ENCODE measurements at regions of chr16 and their contacts with region 1.

Region 1: GRCh38 chr16:54929090-54930004 is 1.3 kb upstream of the IRX5 start:
- DNase-seq: peak; percentile 100
- H3K4me3 ChIP-seq: peak overlapping the region; percentile 76
- H3K4me3 Mint-ChIP-seq: peak overlapping the region; percentile 96
- H3K27ac Mint-ChIP-seq: peak overlapping the region; percentile 89
- H3K4me1 ChIP-seq: peaks cover 24% of the 10 kb centered on the region
- H3K4me1 Mint-ChIP-seq: peaks cover 27% of the 10 kb centered on the region
- H3K27me3 ChIP-seq: no peaks in the 10 kb centered on the region
- H3K27me3 Mint-ChIP-seq: no peaks in the 10 kb centered on the region
- CTCF ChIP-seq: peak in 1 of 2 experiments; percentile 23

Region 2: GRCh38 chr16:53881371-53881770 is 1048.0 kb before region 1 on chr16:
- CTCF ChIA-PET with region 1: no interaction called
- POLR2A ChIA-PET with region 1: no interaction called
- intact Hi-C with region 1: loop called (anchors 2 kb)
- DNase-seq: peak; percentile 77 to 91
- H3K4me3 ChIP-seq: no peak overlapping the region
- H3K4me3 Mint-ChIP-seq: no peak overlapping the region
- H3K27ac Mint-ChIP-seq: peak overlapping the region; percentile 84
- H3K4me1 ChIP-seq: peaks cover 37% of the 10 kb centered on the region
- H3K4me1 Mint-ChIP-seq: peaks cover 27% of the 10 kb centered on the region
- H3K27me3 ChIP-seq: no peaks in the 10 kb centered on the region
- H3K27me3 Mint-ChIP-seq: no peaks in the 10 kb centered on the region
- CTCF ChIP-seq: no peak

Region 3: DNA sequence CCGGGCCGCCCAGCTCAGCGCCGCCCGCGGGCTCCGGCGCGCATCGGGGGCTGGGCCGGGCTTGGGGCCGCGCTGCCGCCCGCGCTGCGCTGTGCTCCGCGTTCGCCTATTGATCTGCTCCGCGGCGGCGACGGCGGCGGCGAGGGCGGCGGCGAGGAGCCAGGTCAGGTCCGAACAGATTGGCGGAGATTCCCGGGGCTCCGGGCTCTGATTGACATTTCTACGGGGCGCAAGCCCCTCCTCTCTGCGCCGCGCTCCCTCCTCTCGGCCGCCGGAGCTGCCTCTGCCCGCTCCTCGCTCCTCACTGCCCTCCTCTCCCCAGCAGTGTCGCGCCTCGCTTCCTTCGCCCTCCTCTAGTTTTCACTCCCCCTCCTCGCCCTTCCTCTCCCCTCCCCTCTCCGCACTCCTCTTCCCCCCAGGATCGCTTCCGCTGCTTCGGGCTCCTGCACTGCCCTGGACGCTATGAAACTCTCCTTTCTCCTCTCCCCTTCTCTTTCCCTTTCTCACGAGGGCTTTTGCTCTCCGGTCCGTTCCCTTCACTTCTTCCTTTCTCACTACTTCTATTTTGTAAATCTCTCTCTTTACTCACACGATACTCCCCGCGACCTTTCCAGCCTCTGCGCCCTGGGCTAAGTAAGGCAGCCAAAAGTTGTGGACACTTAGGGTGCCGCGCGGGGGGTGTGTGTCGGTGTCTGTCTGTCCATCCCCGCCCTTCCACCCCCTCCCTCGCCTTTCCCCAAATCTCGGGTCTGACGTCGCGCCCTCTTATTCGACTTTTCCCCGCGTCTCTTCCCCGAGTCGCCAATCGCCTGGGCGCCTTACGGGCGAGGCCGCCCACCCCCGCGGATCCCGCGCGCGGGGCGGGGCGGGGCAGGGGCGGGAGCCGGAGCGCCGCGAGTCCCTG is 643.0 kb before region 1 on chr16 and contains the start of gene IRX3:
- CTCF ChIA-PET with region 1: interaction called, 3 read pairs
- POLR2A ChIA-PET with region 1: no interaction called
- intact Hi-C with region 1: loop called (anchors 1 kb)
- DNase-seq: peak; percentile 90 to 95
- H3K4me3 ChIP-seq: peak within 1 kb of the TSS; percentile 83
- H3K4me3 Mint-ChIP-seq: peak within 1 kb of the TSS; percentile 85
- H3K27ac Mint-ChIP-seq: peak within 1 kb of the TSS; percentile 79
- H3K4me1 ChIP-seq: 0 out of 2 replicates have a peak, but pooled peaks cover 5% of the 10 kb centered on the region
- H3K4me1 Mint-ChIP-seq: peaks cover 7% of the 10 kb centered on the region
- H3K27me3 ChIP-seq: no peaks in the 10 kb centered on the region
- H3K27me3 Mint-ChIP-seq: no peaks in the 10 kb centered on the region
- CTCF ChIP-seq: no peak
- total RNA-seq, gene IRX3: 63.2 and 73.3 TPM in 2 replicates

Region 4: GRCh38 chr16:54627616-54628015 is 301.7 kb before region 1 on chr16:
- CTCF ChIA-PET with region 1: interaction called, 4 read pairs
- POLR2A ChIA-PET with region 1: interaction called, 4 read pairs
- intact Hi-C with region 1: loop called (anchors 1 kb)
- DNase-seq: no peak
- H3K4me3 ChIP-seq: no peak overlapping the region
- H3K4me3 Mint-ChIP-seq: peak overlapping the region; percentile 13
- H3K27ac Mint-ChIP-seq: peak overlapping the region; percentile 75
- H3K4me1 ChIP-seq: peaks cover 33% of the 10 kb centered on the region
- H3K4me1 Mint-ChIP-seq: peaks cover 42% of the 10 kb centered on the region
- H3K27me3 ChIP-seq: no peaks in the 10 kb centered on the region
- H3K27me3 Mint-ChIP-seq: no peaks in the 10 kb centered on the region
- CTCF ChIP-seq: no peak

Region 5: DNA sequence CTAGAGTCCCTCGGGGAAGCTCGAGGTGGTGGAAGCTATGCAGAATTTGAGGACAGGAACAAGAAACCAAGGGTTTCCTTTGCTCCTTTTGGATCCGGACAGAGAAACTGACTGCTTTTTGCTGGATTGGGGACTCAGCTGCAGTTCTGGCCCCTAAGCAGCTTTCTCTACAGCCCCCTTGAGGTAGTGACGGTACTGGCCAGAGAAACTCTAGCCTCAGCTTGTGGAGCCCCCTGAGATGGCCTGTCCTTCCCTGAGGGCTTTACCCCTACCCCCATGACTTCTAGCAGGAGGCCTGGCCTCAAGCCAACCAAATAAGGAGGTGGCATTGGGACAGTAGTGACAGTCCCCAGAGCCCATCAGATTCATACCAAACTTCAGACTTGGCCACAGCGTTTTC is 119.4 kb after region 1 on chr16:
- CTCF ChIA-PET with region 1: no interaction called
- POLR2A ChIA-PET with region 1: interaction called, 3 read pairs
- intact Hi-C with region 1: loop called (anchors 5 kb)
- DNase-seq: no peak
- H3K4me3 ChIP-seq: no peak overlapping the region
- H3K4me3 Mint-ChIP-seq: no peak overlapping the region
- H3K27ac Mint-ChIP-seq: no peak overlapping the region
- H3K4me1 ChIP-seq: peaks cover 38% of the 10 kb centered on the region
- H3K4me1 Mint-ChIP-seq: peaks cover 38% of the 10 kb centered on the region
- H3K27me3 ChIP-seq: no peaks in the 10 kb centered on the region
- H3K27me3 Mint-ChIP-seq: no peaks in the 10 kb centered on the region
- CTCF ChIP-seq: no peak

Region 6: DNA sequence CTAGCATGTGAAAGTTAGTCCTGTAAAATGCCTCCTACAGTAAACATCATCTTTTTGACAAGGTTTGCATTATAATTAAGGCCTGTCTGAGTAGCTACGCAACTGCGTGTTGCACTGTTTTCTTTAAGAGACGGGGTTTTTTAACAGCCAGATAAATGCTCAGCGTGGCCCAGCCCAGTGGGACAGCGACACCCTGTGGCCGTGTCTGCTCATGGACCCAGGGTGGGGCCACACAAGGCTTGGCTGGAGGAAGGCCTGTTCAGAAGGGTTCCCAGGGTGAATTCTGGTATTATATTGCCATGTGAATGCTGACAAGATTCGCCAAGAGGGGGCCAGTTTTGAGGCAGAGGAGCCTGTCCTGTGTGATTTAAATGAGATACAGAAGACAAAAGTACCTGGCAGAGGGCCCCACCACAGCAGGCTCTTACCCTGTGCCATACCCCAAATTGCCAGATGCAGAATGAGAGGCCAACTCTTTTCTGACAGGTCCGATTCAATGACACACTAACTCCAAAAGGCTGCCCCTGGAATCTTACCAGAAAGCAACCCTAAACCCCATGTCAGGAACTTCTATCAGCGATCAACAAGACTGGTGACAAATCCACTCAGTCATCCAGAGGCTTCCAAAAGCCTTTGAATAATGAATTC is 328.7 kb after region 1 on chr16:
- CTCF ChIA-PET with region 1: no interaction called
- POLR2A ChIA-PET with region 1: no interaction called
- intact Hi-C with region 1: loop called (anchors 1 kb)
- DNase-seq: peak; percentile 65 to 86
- H3K4me3 ChIP-seq: no peak overlapping the region
- H3K4me3 Mint-ChIP-seq: no peak overlapping the region
- H3K27ac Mint-ChIP-seq: no peak overlapping the region
- H3K4me1 ChIP-seq: no peaks in the 10 kb centered on the region
- H3K4me1 Mint-ChIP-seq: peaks cover 6% of the 10 kb centered on the region
- H3K27me3 ChIP-seq: no peaks in the 10 kb centered on the region
- H3K27me3 Mint-ChIP-seq: no peaks in the 10 kb centered on the region
- CTCF ChIP-seq: peak; percentile 86 to 93